ENCODE measurements at regions of chr11 and their contacts with region 1.

Region 1: DNA sequence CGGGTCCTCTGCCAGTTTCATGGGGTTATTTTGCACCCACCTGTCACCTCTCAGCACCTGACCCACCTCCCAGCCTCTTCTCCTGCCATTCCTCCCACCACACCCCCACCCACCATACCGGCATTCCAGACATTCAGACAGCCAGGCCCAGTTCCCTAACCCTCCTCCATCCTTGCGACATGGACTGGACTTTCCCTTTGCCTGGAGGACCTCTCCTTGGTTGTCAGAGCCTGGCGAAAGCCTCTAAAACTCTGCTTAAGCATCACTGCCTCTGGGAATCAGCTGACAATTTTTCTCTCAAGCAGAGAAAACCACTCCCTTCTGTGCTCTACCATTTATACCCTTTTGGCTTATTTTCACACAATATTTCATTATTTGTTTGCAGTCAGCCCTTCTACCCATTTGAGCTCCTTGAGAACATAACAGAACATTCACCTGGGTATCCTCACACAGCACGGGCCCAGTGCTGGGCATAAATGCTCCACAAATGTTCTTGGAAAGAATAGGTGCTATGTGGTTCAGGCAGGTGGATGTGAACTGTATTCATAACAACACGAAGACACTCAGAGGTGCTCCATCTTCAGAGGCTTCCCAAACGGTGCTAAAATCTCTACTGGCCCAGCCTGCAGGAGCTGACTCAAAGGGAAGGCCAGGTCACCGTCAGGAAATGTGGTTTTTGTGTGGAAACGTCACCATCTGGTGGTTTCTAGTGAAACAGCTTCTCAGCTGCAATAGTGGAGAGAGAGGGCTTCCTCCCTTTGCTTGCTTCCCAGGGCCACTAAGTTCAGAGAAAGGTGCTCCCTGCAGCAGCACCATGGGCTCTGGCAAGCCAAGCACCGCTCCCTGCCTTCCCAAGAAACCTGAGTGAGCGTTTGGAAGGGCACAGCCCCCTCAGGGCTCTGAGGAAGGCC is 10.4 kb downstream of the SPATA19 start:
- DNase-seq: peak; percentile 78
- ATAC-seq: peak; percentile 82
- H3K4me3 Mint-ChIP-seq: no peak overlapping the region
- H3K27ac Mint-ChIP-seq: no peak overlapping the region
- H3K4me1 Mint-ChIP-seq: peaks cover 3% of the 10 kb centered on the region
- H3K27me3 Mint-ChIP-seq: peaks cover 3% of the 10 kb centered on the region

Region 2: GRCh38 chr11:133134314-133135173 is 700.4 kb before region 1 on chr11:
- CTCF ChIA-PET with region 1: interaction called, 46 read pairs
- DNase-seq: peak; percentile 60
- ATAC-seq: peak; percentile 61
- H3K4me3 Mint-ChIP-seq: no peak overlapping the region
- H3K27ac Mint-ChIP-seq: no peak overlapping the region
- H3K4me1 Mint-ChIP-seq: no peaks in the 10 kb centered on the region
- H3K27me3 Mint-ChIP-seq: peaks cover 3% of the 10 kb centered on the region

Region 3: GRCh38 chr11:133821776-133822175 is 13.2 kb before region 1 on chr11:
- CTCF ChIA-PET with region 1: interaction called, 10 read pairs
- DNase-seq: peak; percentile 48
- ATAC-seq: no peak
- H3K4me3 Mint-ChIP-seq: no peak overlapping the region
- H3K27ac Mint-ChIP-seq: no peak overlapping the region
- H3K4me1 Mint-ChIP-seq: no peaks in the 10 kb centered on the region
- H3K27me3 Mint-ChIP-seq: no peaks in the 10 kb centered on the region